WTC11 (cell line): ENCODE measurements at regions of chr13 and their contacts with region 1.

Region 1: GRCh38 chr13:109610517-109610916 is 175.9 kb downstream of the IRS2 start:
- DNase-seq: peak; percentile 56
- ATAC-seq: peak; percentile 97
- H3K4me3 Mint-ChIP-seq: no peak overlapping the region
- H3K27ac Mint-ChIP-seq: no peak overlapping the region
- H3K4me1 Mint-ChIP-seq: no peaks in the 10 kb centered on the region
- H3K27me3 Mint-ChIP-seq: no peaks in the 10 kb centered on the region
- CTCF ChIP-seq: no peak

Region 2: GRCh38 chr13:109773276-109773675 is 162.8 kb after region 1 on chr13:
- CTCF ChIA-PET with region 1: no interaction called
- POLR2A ChIA-PET with region 1: no interaction called
- DNase-seq: no peak
- ATAC-seq: no peak
- H3K4me3 Mint-ChIP-seq: no peak overlapping the region
- H3K27ac Mint-ChIP-seq: no peak overlapping the region
- H3K4me1 Mint-ChIP-seq: peaks cover 47% of the 10 kb centered on the region
- H3K27me3 Mint-ChIP-seq: no peaks in the 10 kb centered on the region
- CTCF ChIP-seq: no peak

Region 3: DNA sequence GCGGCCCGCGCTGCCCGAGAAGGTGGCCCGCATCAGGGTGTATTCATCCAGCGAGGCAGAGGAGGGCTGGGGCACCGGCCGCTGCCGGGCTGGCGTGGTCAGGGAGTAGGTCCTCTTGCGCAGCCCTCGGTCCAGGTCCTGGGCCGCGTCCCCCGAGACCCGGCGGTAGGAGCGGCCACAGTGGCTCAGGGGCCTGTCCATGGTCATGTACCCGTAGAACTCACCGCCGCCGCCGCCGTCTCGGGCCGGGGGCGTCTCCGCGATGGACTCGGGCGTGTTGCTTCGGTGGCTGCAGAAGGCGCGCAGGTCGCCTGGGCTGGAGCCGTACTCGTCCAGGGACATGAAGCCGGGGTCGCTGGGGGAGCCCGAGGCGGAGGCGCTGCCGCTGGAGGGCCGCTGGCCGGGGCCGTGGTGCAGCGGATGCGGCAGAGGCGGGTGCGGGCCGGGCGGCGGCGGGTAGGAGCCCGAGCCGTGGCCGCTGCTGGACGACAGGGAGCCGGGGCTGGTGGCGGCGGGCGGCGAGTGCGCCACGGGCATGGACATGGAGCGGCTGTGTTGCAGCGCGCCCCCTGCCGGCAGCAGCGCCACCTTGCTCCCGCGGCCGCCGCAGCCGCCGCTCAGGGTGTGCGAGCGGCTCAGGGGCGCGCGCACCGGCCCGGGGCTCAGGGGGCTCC is 173.8 kb after region 1 on chr13:
- CTCF ChIA-PET with region 1: interaction called, 10 read pairs
- POLR2A ChIA-PET with region 1: no interaction called
- DNase-seq: peak; percentile 83
- ATAC-seq: peak; percentile 40
- H3K4me3 Mint-ChIP-seq: peak overlapping the region; percentile 73
- H3K27ac Mint-ChIP-seq: no peak overlapping the region
- H3K4me1 Mint-ChIP-seq: peaks cover 31% of the 10 kb centered on the region
- H3K27me3 Mint-ChIP-seq: no peaks in the 10 kb centered on the region; the same call in 1 of the 2 replicates
- CTCF ChIP-seq: peak; percentile 75